Heart right ventricle (tissue), 16 donors: ENCODE measurements at regions of chr7 and their contacts with region 1.

Region 1: DNA sequence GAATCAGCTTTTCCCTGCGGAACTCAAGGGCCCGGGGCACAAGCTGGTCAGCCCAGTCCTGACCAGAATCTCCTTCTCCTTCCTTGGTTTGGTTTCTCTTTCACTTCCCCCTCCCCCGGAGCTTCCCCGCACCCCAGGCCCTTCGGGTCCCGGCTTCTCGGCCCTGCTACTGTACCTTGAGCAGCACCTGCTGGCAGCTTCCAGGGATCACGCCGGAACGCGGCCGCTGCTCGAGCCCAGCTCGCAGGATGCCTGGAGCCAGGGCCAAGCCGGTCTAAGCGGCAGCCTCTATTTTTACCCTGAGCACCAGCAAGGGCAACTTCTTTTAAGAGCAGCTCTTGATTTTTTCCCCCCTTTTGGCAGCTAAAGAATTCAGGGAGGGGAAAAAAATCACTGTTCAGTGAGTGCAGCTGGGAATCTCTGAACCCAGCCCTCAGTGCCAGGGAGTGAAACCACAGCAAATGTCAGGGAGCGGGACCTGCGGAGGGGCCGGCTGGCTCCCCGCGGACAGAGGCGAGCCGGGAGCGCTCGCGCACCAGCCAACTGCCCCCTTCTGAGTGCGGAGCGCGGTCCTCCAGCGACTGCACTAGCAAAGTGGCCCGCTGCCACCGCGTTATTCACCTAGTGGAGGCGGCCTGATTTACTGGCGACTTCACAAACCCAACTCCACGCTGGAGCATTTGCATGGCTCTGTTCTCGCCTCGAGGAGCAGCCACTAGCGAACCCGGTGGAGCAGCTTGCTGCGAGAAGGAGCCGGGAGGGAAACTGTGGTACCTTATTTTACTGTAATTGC is 2.4 kb upstream of the INHBA start:
- DNase-seq: peak; percentile 82 to 86
- ATAC-seq: peak; percentile 87 to 98 (median 94)
- H3K4me3 ChIP-seq: peak overlapping the region; percentile 7 to 65 (median 56)
- H3K27ac ChIP-seq: peak overlapping the region in 9 of 10 donors; percentile 10 to 88 (median 78)
- H3K4me1 ChIP-seq: peaks cover 0 to 24% (median 7%) of the 10 kb centered on the region in 9 donors
- H3K27me3 ChIP-seq: peaks cover 0 to 7% (median 0%) of the 10 kb centered on the region in 7 donors
- CTCF ChIP-seq: peak; percentile 30 to 78 (median 68)

Region 2: DNA sequence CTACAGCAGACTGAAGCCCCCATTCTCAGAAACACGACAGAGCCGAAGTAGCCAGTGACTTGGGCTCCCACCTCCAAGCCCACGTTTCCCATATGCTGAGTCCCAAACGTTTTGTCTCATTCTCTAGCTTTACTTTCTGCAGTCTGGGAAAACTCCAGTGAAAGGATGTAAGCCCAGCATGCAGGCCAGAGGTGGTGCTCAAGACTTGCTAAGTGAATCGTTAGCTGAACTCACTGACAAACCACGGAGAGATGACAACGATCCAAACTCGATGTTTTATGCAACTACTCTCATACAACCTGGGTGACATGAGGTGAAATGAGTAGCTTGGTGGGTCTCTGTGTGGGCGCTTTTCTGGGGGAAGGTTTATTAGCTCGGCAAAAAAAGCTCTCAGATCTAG is 838.7 kb before region 1 on chr7:
- intact Hi-C with region 1: loop called in 1 of 10 experiments (anchors 10 kb)
- DNase-seq: peak in 1 of 2 donors; percentile 9
- ATAC-seq: peak in 3 of 8 donors; percentile 38 to 51 (median 46)
- H3K4me3 ChIP-seq: no peak overlapping the region
- H3K27ac ChIP-seq: no peak overlapping the region
- H3K4me1 ChIP-seq: no peaks in the 10 kb centered on the region
- H3K27me3 ChIP-seq: no peaks in the 10 kb centered on the region
- CTCF ChIP-seq: peak in 5 of 9 donors; percentile 6 to 46 (median 36)

Region 3: GRCh38 chr7:41003031-41003925 is 702.0 kb before region 1 on chr7:
- intact Hi-C with region 1: loop called in 3 of 10 experiments (anchors 5 to 10 kb)
- DNase-seq: peak in 1 of 2 donors; percentile 37
- ATAC-seq: no peak
- H3K4me3 ChIP-seq: no peak overlapping the region
- H3K27ac ChIP-seq: no peak overlapping the region
- H3K4me1 ChIP-seq: peaks cover 0 to 26% (median 5%) of the 10 kb centered on the region in 9 donors
- H3K27me3 ChIP-seq: no peaks in the 10 kb centered on the region
- CTCF ChIP-seq: peak; percentile 43 to 76 (median 65)

Region 4: GRCh38 chr7:41051535-41051934 is 653.8 kb before region 1 on chr7:
- intact Hi-C with region 1: loop called in 1 of 10 experiments (anchors 5 kb)
- DNase-seq: peak in 1 of 2 donors; percentile 54
- ATAC-seq: peak in 3 of 8 donors; percentile 13 to 48 (median 40)
- H3K4me3 ChIP-seq: no peak overlapping the region
- H3K27ac ChIP-seq: peak overlapping the region in 4 of 10 donors; percentile 8 to 39 (median 34)
- H3K4me1 ChIP-seq: peaks cover 0 to 22% (median 19%) of the 10 kb centered on the region in 9 donors
- H3K27me3 ChIP-seq: no peaks in the 10 kb centered on the region
- CTCF ChIP-seq: no peak

Region 5: GRCh38 chr7:41134300-41135250 is 570.7 kb before region 1 on chr7:
- intact Hi-C with region 1: no loop called
- DNase-seq: no peak
- ATAC-seq: no peak
- H3K4me3 ChIP-seq: no peak overlapping the region
- H3K27ac ChIP-seq: no peak overlapping the region
- H3K4me1 ChIP-seq: peaks cover 0 to 7% (median 0%) of the 10 kb centered on the region in 9 donors
- H3K27me3 ChIP-seq: no peaks in the 10 kb centered on the region
- CTCF ChIP-seq: no peak